HCT116 (cell line): ENCODE measurements at regions of chr9 and their contacts with region 1.

Region 1: DNA sequence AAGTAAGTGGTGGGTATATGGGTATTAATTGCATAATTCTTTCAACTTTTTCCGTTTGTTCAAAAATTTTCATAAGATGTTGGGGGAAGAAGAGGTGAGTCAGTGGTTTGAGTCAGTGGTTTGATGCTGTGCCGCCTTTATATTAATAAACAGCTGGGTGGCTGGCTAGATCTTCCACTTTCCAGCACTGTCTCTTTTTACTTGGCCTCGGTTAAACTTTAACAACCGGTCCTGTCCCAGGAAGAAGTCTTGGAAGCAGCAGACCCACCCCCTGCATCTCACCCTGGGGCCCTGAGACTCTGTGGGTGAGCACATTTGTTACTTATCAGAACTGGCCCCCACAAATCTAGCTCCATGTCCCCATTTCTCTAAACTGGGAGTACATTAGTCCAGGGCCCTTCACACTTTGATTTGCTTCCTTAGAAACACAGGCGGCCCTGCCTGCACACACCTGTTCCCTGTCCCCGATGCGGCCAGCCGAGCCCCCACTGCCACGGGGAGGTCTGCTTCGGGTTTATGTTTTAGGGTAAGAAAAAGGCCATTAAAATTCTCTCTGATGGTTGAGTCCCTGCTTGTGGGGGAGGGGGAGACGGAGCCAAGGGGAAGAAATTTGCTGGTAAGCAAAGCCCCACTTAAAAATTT is 90.7 kb downstream of the PTCH1 start:
- DNase-seq: no peak
- ATAC-seq: peak; percentile 23
- H3K4me3 ChIP-seq: peak overlapping the region; percentile 74
- H3K27ac ChIP-seq: peak overlapping the region; percentile 86
- H3K4me1 ChIP-seq: peaks cover 7 to 20% of the 10 kb centered on the region in 2 experiments; a peak in 3 of 4 replicates
- H3K27me3 ChIP-seq: no peaks in the 10 kb centered on the region
- CTCF ChIP-seq: no peak
- POLR2A ChIP-seq: no peak
- RAD21 ChIP-seq: 0 out of 2 replicates have a peak, but pooled peaks have one; percentile 8

Region 2: DNA sequence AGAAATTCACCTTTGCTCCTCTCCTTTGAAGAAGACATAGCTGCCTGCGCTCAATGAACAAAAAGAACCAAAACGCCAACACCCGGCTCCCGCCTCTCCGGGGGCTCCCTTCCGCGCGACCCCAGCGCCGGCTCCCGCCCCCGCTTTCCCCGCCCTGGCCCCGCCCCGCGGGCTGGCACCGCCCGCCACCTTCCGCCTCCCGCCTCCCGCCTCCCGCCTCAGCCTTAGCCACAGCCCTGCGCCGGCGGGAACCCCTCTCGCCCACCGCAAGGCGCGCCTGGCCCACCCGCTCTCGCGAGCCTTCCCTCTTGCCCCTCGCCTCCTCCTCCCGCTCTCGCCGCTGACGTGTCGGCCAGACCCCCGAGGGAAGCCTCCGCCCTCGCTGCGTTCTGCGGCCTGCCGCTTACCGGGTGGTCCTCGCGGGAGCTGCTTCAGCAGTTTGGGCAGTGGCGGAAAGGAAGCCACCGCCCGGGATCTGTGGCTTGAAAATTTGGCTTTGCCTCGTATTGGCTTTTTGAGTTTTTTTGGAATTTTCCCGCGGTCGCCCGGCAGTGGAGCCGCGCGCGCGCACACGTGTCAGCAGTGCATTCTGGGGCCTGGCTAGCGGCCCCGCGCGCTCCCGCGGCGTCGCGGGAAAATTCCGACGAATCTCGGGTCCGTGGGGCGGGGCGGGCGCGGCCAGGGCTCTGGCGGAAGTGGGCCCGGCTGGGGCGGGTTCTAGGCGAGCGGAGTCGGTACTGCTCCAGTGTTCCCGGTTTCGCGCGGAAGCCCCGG is 108.7 kb before region 1 on chr9 and contains the start of gene FANCC:
- CTCF ChIA-PET with region 1: no interaction called
- POLR2A ChIA-PET with region 1: no interaction called
- RAD21 ChIA-PET with region 1: no interaction called
- intact Hi-C with region 1: loop called (anchors 5 kb)
- DNase-seq: peak; percentile 66
- ATAC-seq: peak; percentile 83
- H3K4me3 ChIP-seq: peak within 1 kb of the TSS; percentile 66 to 72
- H3K27ac ChIP-seq: peak within 1 kb of the TSS; percentile 99
- H3K4me1 ChIP-seq: peaks cover 2 to 41% of the 10 kb centered on the region in 2 experiments; a peak in 3 of 4 replicates
- H3K27me3 ChIP-seq: no peaks in the 10 kb centered on the region
- CTCF ChIP-seq: no peak
- POLR2A ChIP-seq: peak; percentile 36
- RAD21 ChIP-seq: no peak
- total RNA-seq, gene FANCC: 19.4 TPM

Region 3: GRCh38 chr9:95875305-95876137 is 449.5 kb after region 1 on chr9 and contains the start of gene ERCC6L2:
- CTCF ChIA-PET with region 1: no interaction called
- POLR2A ChIA-PET with region 1: no interaction called
- RAD21 ChIA-PET with region 1: no interaction called
- intact Hi-C with region 1: loop called (anchors 5 kb)
- DNase-seq: peak; percentile 99
- ATAC-seq: peak; percentile 88
- H3K4me3 ChIP-seq: no peak within 1 kb of the TSS
- H3K27ac ChIP-seq: no peak within 1 kb of the TSS; the same call in 1 of the 2 replicates
- H3K4me1 ChIP-seq: peaks cover 4 to 7% of the 10 kb centered on the region in 2 experiments; a peak in 3 of 4 replicates
- H3K27me3 ChIP-seq: no peaks in the 10 kb centered on the region
- CTCF ChIP-seq: no peak
- POLR2A ChIP-seq: peak; percentile 77
- RAD21 ChIP-seq: peak; percentile 13; the same call in 1 of the 2 replicates
- total RNA-seq, gene ERCC6L2: 39.2 TPM